ENCODE measurements at regions of chr4 and their contacts with region 1.

Region 1: GRCh38 chr4:163663454-163664225 is 169.2 kb downstream of the TMA16 start:
- DNase-seq: peak; percentile 78
- ATAC-seq: peak; percentile 87
- H3K4me3 ChIP-seq: no peak overlapping the region
- H3K27ac ChIP-seq: peak overlapping the region; percentile 70
- H3K4me1 ChIP-seq: peaks cover 39% of the 10 kb centered on the region
- H3K27me3 ChIP-seq: no peaks in the 10 kb centered on the region
- CTCF ChIP-seq: no peak
- EP300 ChIP-seq: peak; percentile 77 to 80
- POLR2A ChIP-seq: no peak
- RAD21 ChIP-seq: no peak

Region 2: DNA sequence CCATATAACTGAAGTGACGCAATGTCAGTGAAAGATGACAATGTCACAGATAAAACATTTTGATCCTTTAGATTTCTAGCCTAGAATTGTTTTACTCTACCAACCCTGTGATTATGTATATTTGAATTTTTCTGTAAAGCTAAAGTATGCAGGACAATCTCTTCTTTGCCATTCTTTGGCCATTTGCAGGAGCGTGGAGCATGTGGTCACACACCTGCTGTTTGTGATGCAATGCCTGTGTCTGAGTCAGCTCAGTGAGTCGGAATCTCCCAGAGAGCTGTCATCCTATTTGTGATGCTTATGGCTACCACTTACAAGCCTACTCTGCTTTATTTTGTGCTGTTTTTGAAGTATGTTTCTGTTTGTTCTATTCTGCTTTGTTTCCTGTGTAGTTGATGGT is 711.4 kb before region 1 on chr4:
- CTCF ChIA-PET with region 1: no interaction called
- POLR2A ChIA-PET with region 1: no interaction called
- RAD21 ChIA-PET with region 1: no interaction called
- SMC1A ChIA-PET with region 1: no interaction called
- in situ Hi-C with region 1: no loop called
- intact Hi-C with region 1: no loop called
- DNase-seq: no peak
- ATAC-seq: no peak
- H3K4me3 ChIP-seq: no peak overlapping the region
- H3K27ac ChIP-seq: no peak overlapping the region
- H3K4me1 ChIP-seq: no peaks in the 10 kb centered on the region
- H3K27me3 ChIP-seq: no peaks in the 10 kb centered on the region
- CTCF ChIP-seq: no peak
- EP300 ChIP-seq: no peak
- POLR2A ChIP-seq: no peak
- RAD21 ChIP-seq: no peak

Region 3: DNA sequence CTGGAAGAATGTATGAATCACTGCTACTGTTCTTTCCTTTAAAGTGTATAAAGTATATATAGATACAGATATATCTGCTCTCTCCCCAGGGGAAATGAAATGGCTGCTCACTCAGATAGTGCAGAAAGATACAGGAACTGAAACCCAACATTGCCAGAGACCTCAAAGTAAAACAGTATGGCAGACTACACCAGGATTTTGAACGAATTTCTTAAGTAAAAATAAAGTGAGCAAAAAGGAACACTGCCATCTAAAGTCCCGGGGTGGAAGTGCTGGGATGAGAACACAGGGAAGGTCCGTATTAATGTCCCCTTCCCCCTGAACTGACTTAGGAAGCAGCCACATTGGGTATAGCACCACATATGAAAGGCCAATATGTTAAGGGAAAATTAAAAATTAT is 75.8 kb before region 1 on chr4:
- CTCF ChIA-PET with region 1: interaction called, 30 read pairs
- POLR2A ChIA-PET with region 1: interaction called, 15 read pairs
- RAD21 ChIA-PET with region 1: interaction called, 68 read pairs
- SMC1A ChIA-PET with region 1: interaction called, 219 read pairs
- in situ Hi-C with region 1: loop called (anchors 5 kb)
- intact Hi-C with region 1: loop called (anchors 1 kb)
- DNase-seq: peak; percentile 73
- ATAC-seq: peak; percentile 78
- H3K4me3 ChIP-seq: no peak overlapping the region
- H3K27ac ChIP-seq: peak overlapping the region; percentile 25; the same call in 1 of the 2 replicates
- H3K4me1 ChIP-seq: peaks cover 33% of the 10 kb centered on the region
- H3K27me3 ChIP-seq: no peaks in the 10 kb centered on the region
- CTCF ChIP-seq: peak; percentile 28 to 62 (median 46); a peak in 5 of 6 replicates
- EP300 ChIP-seq: peak; percentile 63 to 78; a peak in 3 of 4 replicates
- POLR2A ChIP-seq: no peak
- RAD21 ChIP-seq: peak; percentile 20; the same call in 1 of the 2 replicates

Region 4: DNA sequence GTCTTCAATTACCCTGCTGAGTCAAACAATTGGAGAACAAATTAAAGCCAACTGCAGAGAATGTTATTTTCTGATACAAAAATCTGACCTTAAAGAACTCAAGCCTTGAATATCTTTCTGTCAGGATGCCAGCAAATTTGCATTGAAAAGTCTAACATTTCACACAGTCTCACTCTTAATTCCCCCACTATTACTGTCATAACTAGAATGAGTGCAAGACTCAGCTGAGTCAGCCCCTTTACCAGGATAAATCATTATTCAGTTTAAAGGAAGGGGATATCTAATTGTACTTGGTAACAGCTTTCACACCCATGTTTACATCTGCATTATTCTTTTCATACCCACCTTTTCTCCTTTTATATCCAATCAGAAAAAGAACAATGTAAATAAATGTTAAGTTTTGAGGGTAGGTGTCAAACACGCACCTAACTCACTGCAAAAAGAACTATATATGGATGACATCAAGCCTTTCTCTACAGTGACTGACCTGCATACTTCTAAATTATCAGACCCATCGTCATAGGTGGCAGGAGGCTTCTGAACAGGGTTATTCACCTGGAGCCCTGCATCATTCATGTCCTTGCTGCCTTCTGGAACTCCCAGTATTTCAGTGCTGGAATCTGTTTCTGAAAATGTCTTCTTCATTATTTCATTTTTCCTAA is 51.7 kb before region 1 on chr4:
- CTCF ChIA-PET with region 1: interaction called, 4 read pairs
- POLR2A ChIA-PET with region 1: interaction called, 4 read pairs
- RAD21 ChIA-PET with region 1: interaction called, 26 read pairs
- SMC1A ChIA-PET with region 1: interaction called, 28 read pairs
- in situ Hi-C with region 1: no loop called
- intact Hi-C with region 1: no loop called
- DNase-seq: no peak
- ATAC-seq: peak; percentile 83
- H3K4me3 ChIP-seq: no peak overlapping the region
- H3K27ac ChIP-seq: peak overlapping the region; percentile 38
- H3K4me1 ChIP-seq: peaks cover 25% of the 10 kb centered on the region
- H3K27me3 ChIP-seq: no peaks in the 10 kb centered on the region
- CTCF ChIP-seq: no peak
- EP300 ChIP-seq: peak in 1 of 2 experiments; percentile 16; a peak in 1 of 4 replicates
- POLR2A ChIP-seq: no peak
- RAD21 ChIP-seq: no peak

Region 5: DNA sequence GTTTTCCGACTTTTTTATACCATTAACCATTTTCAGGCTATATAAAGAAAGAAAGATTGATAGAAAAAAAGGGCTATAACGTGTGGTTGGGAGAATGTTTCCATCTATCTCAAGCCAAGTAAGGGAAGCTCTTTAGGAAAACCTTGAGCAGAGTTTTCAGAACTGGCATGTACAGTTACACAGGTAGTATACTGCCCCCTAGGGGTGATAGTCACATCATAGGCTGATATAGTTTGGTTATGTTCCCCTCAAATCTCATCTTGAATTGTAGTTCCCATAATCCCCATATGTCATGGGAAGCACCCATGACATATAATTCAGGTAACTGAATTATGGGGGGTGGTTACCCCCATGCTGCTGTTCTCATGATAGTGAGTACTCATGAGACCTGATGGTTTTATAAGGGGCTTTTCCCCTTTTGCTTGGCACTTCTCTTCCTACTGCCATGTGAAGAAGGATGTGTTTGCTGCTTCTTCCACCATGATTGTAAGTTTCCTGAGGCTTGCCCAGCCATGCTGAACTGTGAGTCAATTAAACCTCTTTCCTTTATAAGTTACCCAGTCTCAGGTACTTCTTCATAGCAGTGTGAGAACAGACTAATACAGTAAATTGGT is 17.7 kb after region 1 on chr4:
- CTCF ChIA-PET with region 1: interaction called, 81 read pairs
- POLR2A ChIA-PET with region 1: interaction called, 4 read pairs
- RAD21 ChIA-PET with region 1: interaction called, 31 read pairs
- SMC1A ChIA-PET with region 1: interaction called, 81 read pairs
- in situ Hi-C with region 1: no loop called
- intact Hi-C with region 1: no loop called
- DNase-seq: no peak
- ATAC-seq: peak; percentile 93
- H3K4me3 ChIP-seq: no peak overlapping the region
- H3K27ac ChIP-seq: no peak overlapping the region
- H3K4me1 ChIP-seq: no peaks in the 10 kb centered on the region
- H3K27me3 ChIP-seq: no peaks in the 10 kb centered on the region
- CTCF ChIP-seq: peak; percentile 58 to 61 (median 60)
- EP300 ChIP-seq: no peak
- POLR2A ChIP-seq: no peak
- RAD21 ChIP-seq: peak; percentile 89

Region 6: GRCh38 chr4:163744861-163745260 is 81.2 kb after region 1 on chr4:
- CTCF ChIA-PET with region 1: interaction called, 6 read pairs
- POLR2A ChIA-PET with region 1: interaction called, 5 read pairs
- RAD21 ChIA-PET with region 1: interaction called, 29 read pairs
- SMC1A ChIA-PET with region 1: interaction called, 5 read pairs
- in situ Hi-C with region 1: no loop called
- intact Hi-C with region 1: no loop called
- DNase-seq: peak; percentile 57
- ATAC-seq: peak; percentile 94
- H3K4me3 ChIP-seq: 0 out of 2 replicates have a peak overlapping the region, but pooled peaks have one; percentile 5
- H3K27ac ChIP-seq: peak overlapping the region; percentile 57
- H3K4me1 ChIP-seq: peaks cover 10% of the 10 kb centered on the region
- H3K27me3 ChIP-seq: no peaks in the 10 kb centered on the region
- CTCF ChIP-seq: no peak
- EP300 ChIP-seq: peak; percentile 22 to 58; a peak in 2 of 4 replicates
- POLR2A ChIP-seq: no peak
- RAD21 ChIP-seq: no peak

Region 7: GRCh38 chr4:164799410-164799809 is 1135.8 kb after region 1 on chr4:
- CTCF ChIA-PET with region 1: no interaction called
- POLR2A ChIA-PET with region 1: no interaction called
- RAD21 ChIA-PET with region 1: no interaction called
- SMC1A ChIA-PET with region 1: no interaction called
- in situ Hi-C with region 1: no loop called
- intact Hi-C with region 1: no loop called
- DNase-seq: no peak
- ATAC-seq: no peak
- H3K4me3 ChIP-seq: no peak overlapping the region
- H3K27ac ChIP-seq: no peak overlapping the region
- H3K4me1 ChIP-seq: no peaks in the 10 kb centered on the region
- H3K27me3 ChIP-seq: no peaks in the 10 kb centered on the region
- CTCF ChIP-seq: no peak
- EP300 ChIP-seq: no peak
- POLR2A ChIP-seq: no peak
- RAD21 ChIP-seq: no peak